K562 (cell line): ENCODE measurements at regions of chr6 and their contacts with region 1.

Region 1: DNA sequence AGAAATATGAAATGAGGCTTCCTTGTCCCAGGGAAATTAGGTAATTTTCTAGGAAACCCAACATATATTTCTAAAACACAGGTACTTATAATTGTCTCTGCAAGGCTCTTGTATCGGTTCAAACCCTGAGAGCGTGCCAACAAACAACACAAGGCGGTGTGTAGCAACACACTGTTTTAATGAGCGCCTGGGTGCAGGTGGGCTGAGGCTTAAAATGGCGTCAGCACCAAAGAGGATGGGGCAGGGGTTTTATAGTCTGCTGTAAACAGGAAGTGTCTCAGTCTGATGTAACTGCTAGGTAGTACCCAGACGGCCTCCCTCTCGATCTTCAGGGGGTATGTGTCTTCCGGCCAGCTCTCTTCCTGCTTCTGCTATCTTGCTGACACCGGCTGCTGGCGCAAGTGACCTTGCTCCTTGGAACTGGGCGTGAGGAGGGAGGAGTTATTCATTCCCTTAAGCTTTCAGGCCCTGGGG is 69.7 kb downstream of the EPB41L2 start:
- DNase-seq: peak; percentile 29 to 89 (median 49)
- ATAC-seq: peak; percentile 80
- H3K4me3 ChIP-seq: no peak overlapping the region
- H3K27ac ChIP-seq: peak overlapping the region; percentile 79
- H3K4me1 ChIP-seq: peaks cover 8 to 17% of the 10 kb centered on the region in 2 experiments; a peak in 4 of 5 replicates
- H3K27me3 ChIP-seq: no peaks in the 10 kb centered on the region
- CTCF ChIP-seq: no peak
- EP300 ChIP-seq: peak; percentile 86
- POLR2A ChIP-seq: peak; percentile 43; the same call in 1 of the 2 replicates
- RAD21 ChIP-seq: no peak

Region 2: DNA sequence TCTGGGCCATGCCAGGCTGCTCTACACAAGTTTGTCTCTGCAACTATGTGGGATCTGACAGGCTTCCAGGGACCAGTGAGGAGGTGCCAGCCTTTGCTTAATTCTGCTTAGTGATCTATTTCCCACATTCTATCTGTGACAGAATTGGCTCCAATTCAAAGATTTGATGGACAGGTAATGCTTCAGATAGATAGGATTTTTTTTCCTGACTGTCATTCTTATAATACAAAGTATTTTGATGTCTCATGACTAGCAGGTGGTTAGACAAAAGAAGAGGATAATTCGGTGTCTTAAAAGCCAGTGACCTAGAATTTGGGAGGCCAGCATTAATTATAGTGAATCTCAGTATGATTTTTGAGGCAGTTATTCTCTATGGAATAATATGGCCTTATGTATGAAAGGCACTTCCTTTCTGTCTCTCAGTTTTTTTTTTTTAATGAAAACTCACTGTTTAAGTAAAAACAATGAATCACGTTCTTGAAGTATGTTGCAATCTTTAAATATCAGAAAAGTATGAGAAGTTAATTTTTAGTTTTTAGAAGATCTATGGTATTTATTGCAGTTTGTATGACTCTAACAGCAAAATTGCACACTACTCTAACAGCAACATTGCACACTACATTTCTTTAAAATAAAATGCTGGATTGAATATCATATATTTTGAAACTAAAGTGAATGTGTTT is 583.8 kb before region 1 on chr6:
- CTCF ChIA-PET with region 1: no interaction called
- POLR2A ChIA-PET with region 1: no interaction called
- in situ Hi-C with region 1: no loop called
- intact Hi-C with region 1: no loop called
- DNase-seq: no peak
- ATAC-seq: no peak
- H3K4me3 ChIP-seq: no peak overlapping the region
- H3K27ac ChIP-seq: no peak overlapping the region
- H3K4me1 ChIP-seq: no peaks in the 10 kb centered on the region
- H3K27me3 ChIP-seq: no peaks in the 10 kb centered on the region; a peak in 1 of 5 replicates
- CTCF ChIP-seq: no peak
- EP300 ChIP-seq: no peak
- POLR2A ChIP-seq: no peak
- RAD21 ChIP-seq: no peak

Region 3: GRCh38 chr6:130749402-130749801 is 243.9 kb before region 1 on chr6:
- CTCF ChIA-PET with region 1: no interaction called
- POLR2A ChIA-PET with region 1: no interaction called
- in situ Hi-C with region 1: no loop called
- intact Hi-C with region 1: no loop called
- DNase-seq: peak in 1 of 4 experiments; percentile 4
- ATAC-seq: no peak
- H3K4me3 ChIP-seq: no peak overlapping the region
- H3K27ac ChIP-seq: no peak overlapping the region
- H3K4me1 ChIP-seq: no peaks in the 10 kb centered on the region
- H3K27me3 ChIP-seq: no peaks in the 10 kb centered on the region
- CTCF ChIP-seq: 0 out of 6 replicates have a peak, but pooled peaks of 1 of the 3 experiments have one; percentile 13
- EP300 ChIP-seq: no peak
- POLR2A ChIP-seq: no peak
- RAD21 ChIP-seq: no peak

Region 4: DNA sequence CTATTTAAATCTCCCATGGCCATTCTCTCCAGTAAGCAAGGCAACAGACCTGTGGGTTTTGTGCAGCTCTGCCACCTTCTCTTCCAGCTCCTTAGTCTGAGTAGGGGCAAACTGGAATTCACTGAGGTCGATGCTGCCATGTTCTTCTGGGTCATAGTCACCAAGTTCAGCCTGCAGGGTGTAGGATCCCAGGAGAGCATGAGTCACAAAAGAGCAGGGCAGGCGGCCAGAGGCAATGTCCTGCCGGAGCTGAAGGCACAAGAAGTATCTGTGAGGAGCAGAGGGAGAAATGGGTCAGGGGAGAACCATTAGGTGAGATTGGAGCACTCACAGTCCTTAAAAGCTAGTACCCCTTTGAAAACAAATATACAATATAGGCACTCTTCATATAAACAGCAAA is 92.4 kb before region 1 on chr6:
- CTCF ChIA-PET with region 1: no interaction called
- POLR2A ChIA-PET with region 1: no interaction called
- in situ Hi-C with region 1: no loop called
- intact Hi-C with region 1: no loop called
- DNase-seq: no peak
- ATAC-seq: no peak
- H3K4me3 ChIP-seq: no peak overlapping the region
- H3K27ac ChIP-seq: no peak overlapping the region
- H3K4me1 ChIP-seq: no peaks in the 10 kb centered on the region
- H3K27me3 ChIP-seq: no peaks in the 10 kb centered on the region
- CTCF ChIP-seq: no peak
- EP300 ChIP-seq: no peak
- POLR2A ChIP-seq: no peak
- RAD21 ChIP-seq: no peak

Region 5: GRCh38 chr6:130955755-130956154 is 37.6 kb before region 1 on chr6:
- CTCF ChIA-PET with region 1: no interaction called
- POLR2A ChIA-PET with region 1: interaction called, 3 read pairs
- in situ Hi-C with region 1: no loop called
- intact Hi-C with region 1: loop called (anchors 1 kb)
- DNase-seq: no peak
- ATAC-seq: no peak
- H3K4me3 ChIP-seq: no peak overlapping the region
- H3K27ac ChIP-seq: no peak overlapping the region
- H3K4me1 ChIP-seq: no peaks in the 10 kb centered on the region
- H3K27me3 ChIP-seq: no peaks in the 10 kb centered on the region
- CTCF ChIP-seq: no peak
- EP300 ChIP-seq: no peak
- POLR2A ChIP-seq: no peak
- RAD21 ChIP-seq: no peak

Region 6: DNA sequence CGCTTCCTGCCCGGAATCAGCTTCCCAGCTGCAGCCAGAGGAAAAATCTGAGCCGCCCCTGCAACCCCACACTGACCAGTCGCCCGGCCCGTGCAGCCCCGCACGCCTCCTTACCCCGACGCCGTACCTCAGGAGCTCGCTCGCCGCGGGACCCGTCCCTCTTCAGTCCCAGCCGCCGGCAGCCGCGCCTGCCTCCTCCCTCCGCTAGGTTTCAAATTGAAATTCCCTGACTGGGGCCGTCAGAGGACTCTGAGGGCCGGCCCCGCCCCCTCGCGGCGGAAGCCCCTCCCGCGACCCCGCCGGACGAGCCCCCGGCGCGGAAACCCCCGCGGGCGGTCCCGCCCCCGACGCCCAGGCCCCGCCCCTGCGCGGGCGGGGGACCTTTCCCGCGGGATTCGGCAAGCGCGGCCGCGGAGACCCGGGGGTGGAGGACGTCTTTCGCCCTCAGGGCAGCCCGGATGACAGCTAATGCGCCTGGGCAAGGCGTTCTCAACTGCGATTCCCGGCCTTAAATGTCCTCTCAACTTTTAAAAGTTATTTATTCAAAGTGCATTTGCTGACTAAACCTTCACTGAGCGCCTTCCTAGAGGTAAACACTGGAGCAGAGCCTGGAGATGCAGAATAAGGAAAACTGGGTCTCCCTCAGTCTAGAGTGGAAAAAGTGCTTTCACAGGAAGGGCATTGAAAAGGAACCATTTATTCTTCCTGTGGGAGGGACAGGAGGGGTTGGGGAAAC is 69.9 kb after region 1 on chr6 and contains the start of gene EPB41L2:
- CTCF ChIA-PET with region 1: no interaction called
- POLR2A ChIA-PET with region 1: no interaction called
- in situ Hi-C with region 1: no loop called
- intact Hi-C with region 1: loop called (anchors 2 kb)
- DNase-seq: peak; percentile 86 to 90 (median 86)
- ATAC-seq: peak; percentile 91
- H3K4me3 ChIP-seq: peak within 1 kb of the TSS; percentile 62
- H3K27ac ChIP-seq: peak within 1 kb of the TSS; percentile 64; the same call in 2 of the 3 replicates
- H3K4me1 ChIP-seq: peaks cover 3 to 16% of the 10 kb centered on the region in 2 experiments; a peak in 4 of 5 replicates
- H3K27me3 ChIP-seq: no peaks in the 10 kb centered on the region
- CTCF ChIP-seq: 0 out of 6 replicates have a peak, but pooled peaks of 2 of the 3 experiments have one; percentile 5 to 31
- EP300 ChIP-seq: no peak
- POLR2A ChIP-seq: peak; percentile 54; the same call in 1 of the 2 replicates
- RAD21 ChIP-seq: no peak
- polyA plus RNA-seq, gene EPB41L2: 5.1 to 12.2 TPM

Region 7: GRCh38 chr6:131460614-131461000 is 467.3 kb after region 1 on chr6:
- CTCF ChIA-PET with region 1: no interaction called
- POLR2A ChIA-PET with region 1: no interaction called
- in situ Hi-C with region 1: no loop called
- intact Hi-C with region 1: no loop called
- DNase-seq: no peak
- ATAC-seq: no peak
- H3K4me3 ChIP-seq: no peak overlapping the region
- H3K27ac ChIP-seq: no peak overlapping the region
- H3K4me1 ChIP-seq: no peaks in the 10 kb centered on the region
- H3K27me3 ChIP-seq: no peaks in the 10 kb centered on the region; a peak in 1 of 5 replicates
- CTCF ChIP-seq: no peak
- EP300 ChIP-seq: no peak
- POLR2A ChIP-seq: no peak
- RAD21 ChIP-seq: no peak